ENCODE measurements at regions of chr1 and their contacts with region 1.

Region 1: GRCh38 chr1:228500901-228501871 is 14.0 kb downstream of the RNF187 start:
- DNase-seq: peak; percentile 80 to 88
- ATAC-seq: peak; percentile 90 to 96
- H3K4me3 ChIP-seq: 0 out of 3 replicates have a peak overlapping the region, but pooled peaks have one; percentile 14
- H3K27ac ChIP-seq: peak overlapping the region in 1 of 2 experiments; percentile 62; a peak in 3 of 6 replicates
- H3K4me1 ChIP-seq: peaks cover 3% of the 10 kb centered on the region; the same call in 1 of the 3 replicates
- CTCF ChIP-seq: peak; percentile 88
- EP300 ChIP-seq: no peak
- POLR2A ChIP-seq: no peak
- RAD21 ChIP-seq: peak; percentile 70 to 74

Region 2: DNA sequence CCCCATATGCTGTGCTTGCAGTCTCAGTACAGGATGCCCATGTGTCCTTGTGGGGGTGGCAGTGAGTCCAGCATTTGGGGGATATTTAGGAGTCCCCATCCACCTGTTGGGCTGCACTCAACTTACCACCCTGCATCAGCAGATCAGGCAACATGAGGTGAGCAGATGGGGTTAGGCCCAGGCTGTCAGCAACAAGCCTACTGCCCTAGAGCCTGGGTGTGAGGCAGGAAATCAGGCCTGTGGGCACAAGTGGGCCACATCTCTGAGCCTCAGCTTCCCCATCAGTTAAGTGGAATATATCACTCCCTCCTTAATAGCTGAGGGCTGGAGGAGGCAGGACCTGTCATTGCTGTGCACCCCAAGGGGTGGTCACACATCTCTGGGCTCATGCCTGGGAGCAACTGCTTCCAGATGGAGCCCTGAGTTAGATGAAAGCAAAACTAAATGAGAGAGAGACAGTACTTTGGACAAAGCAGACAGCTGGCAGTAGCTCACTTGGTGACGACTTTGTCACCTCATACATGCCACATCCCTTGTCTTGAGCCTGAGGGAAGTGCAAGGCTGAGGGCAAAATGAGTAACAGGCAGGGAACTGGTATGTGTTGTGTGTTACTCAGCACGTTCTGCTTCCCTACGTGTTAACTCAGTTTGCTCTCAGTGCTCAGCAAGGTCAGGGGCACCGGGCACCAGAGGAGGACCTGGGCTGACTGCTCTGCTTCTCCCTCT is 143.0 kb before region 1 on chr1:
- CTCF ChIA-PET with region 1: no interaction called
- POLR2A ChIA-PET with region 1: no interaction called
- DNase-seq: no peak
- ATAC-seq: no peak
- H3K4me3 ChIP-seq: no peak overlapping the region
- H3K27ac ChIP-seq: no peak overlapping the region
- H3K4me1 ChIP-seq: no peaks in the 10 kb centered on the region
- CTCF ChIP-seq: no peak
- EP300 ChIP-seq: no peak
- POLR2A ChIP-seq: no peak
- RAD21 ChIP-seq: no peak

Region 3: DNA sequence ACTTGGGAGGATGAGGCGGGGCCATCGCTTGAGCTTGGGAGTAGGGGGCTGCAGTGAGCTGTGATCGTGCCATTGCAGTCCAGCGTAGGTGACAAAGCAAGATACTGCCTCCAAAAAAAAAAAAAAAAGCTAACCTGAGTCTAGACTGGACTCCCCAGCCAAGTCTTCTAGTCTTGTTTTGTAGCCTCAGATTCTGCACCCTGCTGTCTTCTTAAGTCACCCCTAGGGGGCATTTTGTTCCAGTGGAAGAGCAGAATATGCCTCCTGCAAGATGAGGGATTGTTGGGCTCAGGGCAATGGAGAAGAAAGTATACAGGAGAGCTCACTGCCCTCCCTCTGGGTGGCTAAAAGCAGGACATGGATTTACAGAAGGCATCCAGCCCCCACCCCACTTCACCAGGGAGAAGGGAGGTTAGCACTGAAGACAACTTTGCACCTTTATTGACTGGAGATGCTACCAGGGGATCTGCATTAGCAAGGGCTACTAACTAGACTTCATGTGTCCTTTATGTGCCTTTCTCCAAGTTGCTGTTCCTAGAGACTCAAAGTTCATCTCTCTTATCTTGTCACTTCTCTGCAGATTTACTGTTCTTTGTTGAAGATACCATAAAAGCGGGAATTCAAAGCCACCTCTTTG is 29.3 kb before region 1 on chr1:
- CTCF ChIA-PET with region 1: interaction called, 10 read pairs
- POLR2A ChIA-PET with region 1: no interaction called
- DNase-seq: peak; percentile 64 to 75
- ATAC-seq: peak; percentile 70 to 89
- H3K4me3 ChIP-seq: no peak overlapping the region
- H3K27ac ChIP-seq: no peak overlapping the region
- H3K4me1 ChIP-seq: no peaks in the 10 kb centered on the region
- CTCF ChIP-seq: peak; percentile 40
- EP300 ChIP-seq: no peak
- POLR2A ChIP-seq: no peak
- RAD21 ChIP-seq: peak in 1 of 2 experiments; percentile 55; a peak in 2 of 5 replicates

Region 4: GRCh38 chr1:228478912-228479711 is 22.1 kb before region 1 on chr1:
- CTCF ChIA-PET with region 1: interaction called, 10 read pairs
- POLR2A ChIA-PET with region 1: no interaction called
- DNase-seq: no peak
- ATAC-seq: no peak
- H3K4me3 ChIP-seq: no peak overlapping the region
- H3K27ac ChIP-seq: no peak overlapping the region
- H3K4me1 ChIP-seq: no peaks in the 10 kb centered on the region
- CTCF ChIP-seq: no peak
- EP300 ChIP-seq: no peak
- POLR2A ChIP-seq: no peak
- RAD21 ChIP-seq: no peak

Region 5: GRCh38 chr1:228486596-228487335 is 14.4 kb before region 1 on chr1:
- CTCF ChIA-PET with region 1: interaction called, 26 read pairs
- POLR2A ChIA-PET with region 1: interaction called, 4 read pairs
- DNase-seq: peak; percentile 88 to 95
- ATAC-seq: peak; percentile 84 to 93
- H3K4me3 ChIP-seq: peak overlapping the region; percentile 88
- H3K27ac ChIP-seq: peak overlapping the region; percentile 94 to 97
- H3K4me1 ChIP-seq: peaks cover 41% of the 10 kb centered on the region
- CTCF ChIP-seq: no peak
- EP300 ChIP-seq: no peak
- POLR2A ChIP-seq: peak; percentile 60; the same call in 1 of the 2 replicates
- RAD21 ChIP-seq: no peak

Region 6: DNA sequence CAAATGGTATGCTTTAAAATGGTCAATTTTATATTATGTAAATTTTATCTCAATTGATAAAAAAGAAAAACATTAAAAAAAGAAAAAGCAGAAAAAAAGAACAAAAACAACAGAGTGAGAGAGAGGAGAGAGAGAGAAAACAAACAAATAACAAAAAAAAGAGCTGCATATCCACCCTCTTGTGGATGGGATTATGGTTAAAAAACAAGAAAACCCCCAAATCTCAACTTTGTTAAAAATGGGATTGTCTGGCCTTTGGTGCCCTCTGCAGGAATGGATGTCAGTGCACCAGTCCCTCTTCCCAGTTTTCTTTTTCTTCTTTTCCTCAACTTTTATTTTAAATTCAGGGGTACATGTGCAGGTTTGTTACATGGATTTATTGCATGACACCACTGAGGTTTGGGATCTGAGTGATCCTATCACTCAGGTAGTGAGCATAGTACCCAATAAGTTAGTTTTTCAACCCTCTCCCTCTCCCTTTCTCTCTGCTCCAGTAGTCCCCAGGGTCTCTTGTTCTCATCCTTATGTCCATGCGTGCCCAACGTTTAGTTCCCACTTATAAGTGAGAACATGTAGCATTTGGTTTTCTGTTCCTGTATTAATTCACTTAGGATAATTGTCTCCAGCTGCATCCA is 14.1 kb after region 1 on chr1:
- CTCF ChIA-PET with region 1: interaction called, 64 read pairs
- POLR2A ChIA-PET with region 1: no interaction called
- DNase-seq: peak; percentile 55 to 60
- ATAC-seq: peak; percentile 47 to 83; a peak in 3 of 6 replicates
- H3K4me3 ChIP-seq: no peak overlapping the region
- H3K27ac ChIP-seq: no peak overlapping the region
- H3K4me1 ChIP-seq: no peaks in the 10 kb centered on the region
- CTCF ChIP-seq: peak; percentile 94
- EP300 ChIP-seq: no peak
- POLR2A ChIP-seq: no peak
- RAD21 ChIP-seq: peak; percentile 95